Ovary (tissue), 10 donors: ENCODE measurements at regions of chrX and their contacts with region 1.

Region 1: DNA sequence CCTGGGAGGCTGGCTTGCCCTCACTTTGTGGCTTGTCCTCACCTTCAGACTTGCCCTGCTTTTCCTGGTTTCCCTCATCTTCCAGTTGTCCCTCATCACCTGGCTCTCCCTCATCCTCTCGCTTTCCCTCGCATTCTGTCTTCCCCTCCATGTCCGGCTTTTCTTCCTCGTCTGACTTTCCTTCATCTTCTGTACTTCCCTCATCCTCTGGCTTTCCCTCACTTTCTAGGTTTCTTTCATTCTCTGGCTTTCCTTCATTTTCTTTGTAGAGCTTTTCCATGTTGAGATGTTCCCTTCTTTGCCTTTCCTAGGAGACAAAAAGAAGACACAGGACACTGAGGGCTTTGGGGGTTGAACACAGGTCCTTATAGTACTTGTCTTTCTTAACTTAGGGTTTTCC is 2.3 kb downstream of the TCEAL5 start:
- DNase-seq: no peak
- H3K4me3 ChIP-seq: no peak overlapping the region
- H3K27ac ChIP-seq: no peak overlapping the region
- H3K4me1 ChIP-seq: no peaks in the 10 kb centered on the region
- H3K27me3 ChIP-seq: no peaks in the 10 kb centered on the region
- CTCF ChIP-seq: no peak
- EP300 ChIP-seq: no peak
- POLR2A ChIP-seq: no peak

Region 2: GRCh38 chrX:102835504-102836146 is 438.7 kb before region 1 on chrX:
- intact Hi-C with region 1: no loop called
- DNase-seq: peak in 1 of 5 donors; percentile 22
- H3K4me3 ChIP-seq: no peak overlapping the region
- H3K27ac ChIP-seq: no peak overlapping the region
- H3K4me1 ChIP-seq: no peaks in the 10 kb centered on the region
- H3K27me3 ChIP-seq: no peaks in the 10 kb centered on the region
- CTCF ChIP-seq: no peak
- EP300 ChIP-seq: no peak
- POLR2A ChIP-seq: no peak

Region 3: GRCh38 chrX:103311399-103311780 is 37.1 kb after region 1 on chrX:
- intact Hi-C with region 1: loop called in 1 of 4 experiments (anchors 2 kb)
- DNase-seq: no peak
- H3K4me3 ChIP-seq: no peak overlapping the region
- H3K27ac ChIP-seq: no peak overlapping the region
- H3K4me1 ChIP-seq: no peaks in the 10 kb centered on the region
- H3K27me3 ChIP-seq: no peaks in the 10 kb centered on the region
- CTCF ChIP-seq: no peak
- EP300 ChIP-seq: no peak
- POLR2A ChIP-seq: no peak